Upper lobe of right lung (tissue), 1 donor: ENCODE measurements at regions of chr5 and their contacts with region 1.

Region 1: GRCh38 chr5:66769839-66770617 is 173.8 kb downstream of the MAST4 start:
- DNase-seq: no peak
- ATAC-seq: peak; percentile 50
- H3K4me3 ChIP-seq: no peak overlapping the region
- H3K27ac ChIP-seq: no peak overlapping the region
- H3K4me1 ChIP-seq: no peaks in the 10 kb centered on the region
- H3K27me3 ChIP-seq: no peaks in the 10 kb centered on the region
- CTCF ChIP-seq: no peak

Region 2: DNA sequence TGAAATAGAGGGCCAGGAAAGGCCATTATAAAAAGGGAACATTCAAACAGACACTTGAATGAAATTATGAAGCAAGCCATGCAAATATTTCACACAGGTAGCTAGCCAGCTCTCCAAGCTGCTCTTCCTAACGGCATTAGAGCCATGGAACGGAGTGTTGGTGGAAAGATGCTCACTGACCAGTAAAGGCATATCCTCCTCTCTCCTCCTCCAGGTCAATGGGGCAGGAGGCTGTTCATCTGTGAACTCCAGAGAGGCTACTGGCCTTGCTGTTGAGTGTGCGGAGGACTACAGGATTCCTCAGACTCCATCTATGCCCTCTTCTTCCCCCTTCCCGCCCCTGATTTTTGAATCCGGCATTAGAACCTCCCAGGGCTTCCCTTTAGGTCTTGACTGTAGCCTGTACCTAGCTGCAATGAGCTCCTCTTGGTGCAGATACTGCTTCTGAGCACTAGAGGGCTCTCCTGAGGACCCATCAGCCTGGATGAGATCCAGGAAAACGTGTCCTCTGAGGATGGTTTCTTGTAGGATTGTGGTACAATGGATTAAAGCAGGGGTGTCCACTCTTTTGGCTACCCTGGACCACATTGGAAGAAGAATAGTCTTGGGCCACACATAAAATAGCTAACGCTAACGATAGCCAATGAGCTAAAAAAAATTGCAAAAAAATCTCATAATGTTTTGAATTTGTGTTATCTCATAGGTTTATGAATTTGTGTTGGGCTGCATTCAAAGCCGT is 463.8 kb before region 1 on chr5:
- intact Hi-C with region 1: loop called (anchors 10 kb)
- DNase-seq: no peak
- ATAC-seq: peak; percentile 96
- H3K4me3 ChIP-seq: no peak overlapping the region
- H3K27ac ChIP-seq: no peak overlapping the region
- H3K4me1 ChIP-seq: no peaks in the 10 kb centered on the region
- H3K27me3 ChIP-seq: no peaks in the 10 kb centered on the region
- CTCF ChIP-seq: peak; percentile 82